ENCODE measurements at regions of chr5 and their contacts with region 1.

Region 1: DNA sequence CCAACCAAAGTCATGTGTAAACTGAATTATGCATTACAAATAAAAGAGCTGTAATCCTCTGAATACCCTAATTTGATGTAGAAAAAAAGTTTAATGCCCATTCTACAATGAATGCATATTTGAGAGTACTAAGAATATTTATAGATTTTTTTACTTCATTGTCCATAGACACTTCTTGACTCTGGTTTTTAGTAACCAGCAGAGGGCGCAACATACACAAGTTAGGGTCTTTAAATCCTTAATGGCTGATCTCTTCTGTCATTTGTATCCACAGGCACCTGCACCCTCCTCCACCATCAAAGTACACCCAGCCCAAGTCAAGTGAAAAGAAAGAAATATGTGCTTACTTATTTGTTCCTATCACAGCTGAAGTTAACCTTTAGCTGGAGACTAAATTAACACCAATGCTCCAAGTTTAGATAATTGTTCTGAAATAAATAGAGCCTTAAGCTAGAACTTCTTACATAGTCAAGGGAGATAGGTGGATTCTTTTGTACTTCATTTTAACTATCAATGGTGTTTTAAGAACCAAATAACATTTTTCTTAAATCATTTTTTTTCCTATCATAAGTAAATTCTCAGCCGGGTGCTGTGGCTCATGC is 524.2 kb upstream of the DAB2 start:
- DNase-seq: peak; percentile 55
- H3K27ac ChIP-seq: no peak overlapping the region
- CTCF ChIP-seq: peak; percentile 84

Region 2: GRCh38 chr5:40688127-40688761 is 739.3 kb after region 1 on chr5:
- CTCF ChIA-PET with region 1: interaction called, 10 read pairs
- POLR2A ChIA-PET with region 1: no interaction called
- DNase-seq: peak; percentile 74
- H3K27ac ChIP-seq: no peak overlapping the region
- CTCF ChIP-seq: peak; percentile 91